ENCODE measurements at regions of chr10 and their contacts with region 1.

Region 1: GRCh38 chr10:63157845-63158624 is 24.9 kb downstream of the NRBF2 start:
- DNase-seq: peak; percentile 67
- H3K4me3 Mint-ChIP-seq: no peak overlapping the region
- H3K27ac Mint-ChIP-seq: no peak overlapping the region
- H3K4me1 Mint-ChIP-seq: peaks cover 11% of the 10 kb centered on the region
- H3K27me3 Mint-ChIP-seq: no peaks in the 10 kb centered on the region

Region 2: DNA sequence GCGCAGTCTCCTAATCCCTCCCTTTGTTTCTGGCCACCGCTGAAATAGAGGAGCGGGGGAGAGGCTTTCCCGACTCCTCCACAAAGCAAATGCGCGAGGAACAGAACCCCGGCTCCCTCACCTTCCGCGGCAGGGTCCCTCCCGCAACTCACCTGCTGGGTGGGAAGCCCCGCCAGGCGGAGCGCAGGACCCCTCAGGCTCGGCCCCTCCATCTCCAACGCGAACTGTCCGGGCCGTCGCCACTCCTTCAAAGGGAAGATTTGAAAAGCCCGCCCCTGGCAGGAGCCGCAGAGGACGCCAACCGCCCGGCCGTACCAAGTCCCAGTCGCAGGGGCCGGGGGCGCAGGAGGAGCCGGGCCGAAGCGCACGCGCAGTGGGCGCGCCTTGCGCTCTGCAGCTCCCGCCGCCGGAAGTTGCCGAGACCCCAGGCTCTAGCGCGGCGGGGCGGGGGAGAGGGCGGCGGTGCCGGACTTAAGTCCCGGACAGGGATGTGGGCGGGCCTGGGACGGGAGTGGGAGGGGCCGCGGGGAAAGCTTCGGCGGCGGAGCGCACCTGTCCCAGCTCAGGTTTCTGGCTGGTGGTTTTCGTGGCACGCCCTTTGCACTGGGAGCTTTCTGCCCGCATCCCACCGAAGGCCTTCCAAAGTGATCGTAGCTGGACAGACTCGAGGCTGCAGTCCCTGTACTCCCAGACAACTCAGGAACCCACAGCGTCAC is 889.5 kb before region 1 on chr10 and contains the start of gene RTKN2:
- CTCF ChIA-PET with region 1: interaction called, 3 read pairs
- intact Hi-C with region 1: loop called (anchors 5 kb)
- DNase-seq: peak; percentile 78
- H3K4me3 Mint-ChIP-seq: peak within 1 kb of the TSS; percentile 72
- H3K27ac Mint-ChIP-seq: peak within 1 kb of the TSS; percentile 28
- H3K4me1 Mint-ChIP-seq: peaks cover 23% of the 10 kb centered on the region
- H3K27me3 Mint-ChIP-seq: peaks cover 13% of the 10 kb centered on the region
- total RNA-seq, gene RTKN2: 4.7 to 5.4 TPM

Region 3: GRCh38 chr10:62492012-62492869 is 665.8 kb before region 1 on chr10:
- CTCF ChIA-PET with region 1: no interaction called
- intact Hi-C with region 1: loop called (anchors 1 kb)
- DNase-seq: peak; percentile 8
- H3K4me3 Mint-ChIP-seq: no peak overlapping the region
- H3K27ac Mint-ChIP-seq: no peak overlapping the region
- H3K4me1 Mint-ChIP-seq: no peaks in the 10 kb centered on the region
- H3K27me3 Mint-ChIP-seq: no peaks in the 10 kb centered on the region

Region 4: GRCh38 chr10:62610649-62611229 is 547.3 kb before region 1 on chr10:
- CTCF ChIA-PET with region 1: interaction called, 15 read pairs
- intact Hi-C with region 1: loop called (anchors 1 kb)
- DNase-seq: peak; percentile 83
- H3K4me3 Mint-ChIP-seq: no peak overlapping the region
- H3K27ac Mint-ChIP-seq: no peak overlapping the region
- H3K4me1 Mint-ChIP-seq: peaks cover 31% of the 10 kb centered on the region
- H3K27me3 Mint-ChIP-seq: peaks cover 5% of the 10 kb centered on the region

Region 5: GRCh38 chr10:63003816-63004453 is 154.1 kb before region 1 on chr10:
- CTCF ChIA-PET with region 1: no interaction called
- intact Hi-C with region 1: loop called (anchors 5 kb)
- DNase-seq: no peak
- H3K4me3 Mint-ChIP-seq: no peak overlapping the region
- H3K27ac Mint-ChIP-seq: no peak overlapping the region
- H3K4me1 Mint-ChIP-seq: no peaks in the 10 kb centered on the region
- H3K27me3 Mint-ChIP-seq: peaks cover 8% of the 10 kb centered on the region

Region 6: DNA sequence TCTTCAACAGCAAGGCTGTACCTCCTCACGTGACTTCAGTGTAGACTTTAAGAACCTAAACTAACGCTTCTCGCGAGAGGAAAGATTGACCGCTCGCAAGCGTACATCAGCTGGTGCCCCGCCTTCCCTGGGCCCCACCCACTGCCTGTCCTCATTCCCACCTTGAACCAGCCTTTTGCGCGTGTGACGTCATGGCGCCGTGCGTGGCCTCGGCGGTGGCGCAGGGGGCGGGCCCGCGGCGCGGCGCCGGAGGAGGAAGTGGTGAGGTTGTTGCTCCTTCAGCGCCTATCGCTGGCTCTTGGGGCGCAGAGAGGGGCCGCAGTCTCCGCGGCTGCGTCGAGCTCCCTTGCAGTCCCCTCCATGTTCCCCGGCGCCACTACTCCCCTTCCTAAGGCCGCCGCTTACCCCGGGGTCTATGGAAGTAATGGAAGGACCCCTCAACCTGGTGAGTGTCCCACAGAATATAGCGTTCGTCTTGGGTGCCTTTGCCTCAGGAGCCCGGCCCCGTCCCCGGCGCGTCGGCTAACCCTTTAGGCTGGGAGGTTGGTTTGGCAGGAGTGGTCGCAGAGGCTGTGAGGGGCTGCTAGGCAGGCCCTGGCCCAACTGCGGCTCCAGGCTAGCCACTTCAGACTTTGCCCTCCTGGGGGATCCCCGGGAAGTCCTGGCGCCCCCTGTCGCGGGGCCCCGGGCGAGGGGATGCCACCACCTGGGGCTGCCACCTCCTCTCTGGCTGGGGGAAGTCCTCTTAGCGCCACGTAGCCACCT is 24.8 kb before region 1 on chr10 and contains the start of gene NRBF2:
- CTCF ChIA-PET with region 1: interaction called, 30 read pairs
- intact Hi-C with region 1: loop called (anchors 1 kb)
- DNase-seq: peak; percentile 98
- H3K4me3 Mint-ChIP-seq: peak within 1 kb of the TSS; percentile 89
- H3K27ac Mint-ChIP-seq: peak within 1 kb of the TSS; percentile 92
- H3K4me1 Mint-ChIP-seq: peaks cover 38% of the 10 kb centered on the region
- H3K27me3 Mint-ChIP-seq: no peaks in the 10 kb centered on the region
- total RNA-seq, gene NRBF2: 15.4 to 15.6 TPM

Region 7: DNA sequence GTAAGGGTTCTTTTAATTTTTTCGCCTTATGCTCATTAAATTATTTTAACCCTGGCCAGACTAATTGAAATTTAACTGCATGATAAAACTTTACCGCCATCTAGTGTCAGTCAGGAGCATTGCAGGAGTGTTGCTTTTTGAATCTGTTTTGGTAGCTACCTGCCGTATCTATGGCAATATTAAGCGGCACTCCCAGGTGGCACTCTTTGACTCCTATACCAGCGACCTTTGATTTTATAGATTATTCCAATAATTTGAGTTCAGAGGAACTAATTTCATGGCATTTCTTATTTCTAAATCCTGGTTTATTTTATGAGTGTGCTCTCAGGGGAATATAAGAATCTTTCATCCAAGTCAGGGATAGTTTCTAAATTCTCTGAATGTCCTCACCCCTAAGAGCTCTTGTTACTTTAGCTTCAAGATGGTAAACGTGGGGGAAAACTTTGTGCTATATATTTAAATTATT is 562.1 kb after region 1 on chr10:
- CTCF ChIA-PET with region 1: interaction called, 205 read pairs
- intact Hi-C with region 1: loop called (anchors 2 kb)
- DNase-seq: peak; percentile 67
- H3K4me3 Mint-ChIP-seq: no peak overlapping the region
- H3K27ac Mint-ChIP-seq: no peak overlapping the region
- H3K4me1 Mint-ChIP-seq: peaks cover 10% of the 10 kb centered on the region
- H3K27me3 Mint-ChIP-seq: peaks cover 4% of the 10 kb centered on the region